Mammary epithelial cell (primary cell): ENCODE measurements at regions of chr19 and their contacts with region 1.

Region 1: DNA sequence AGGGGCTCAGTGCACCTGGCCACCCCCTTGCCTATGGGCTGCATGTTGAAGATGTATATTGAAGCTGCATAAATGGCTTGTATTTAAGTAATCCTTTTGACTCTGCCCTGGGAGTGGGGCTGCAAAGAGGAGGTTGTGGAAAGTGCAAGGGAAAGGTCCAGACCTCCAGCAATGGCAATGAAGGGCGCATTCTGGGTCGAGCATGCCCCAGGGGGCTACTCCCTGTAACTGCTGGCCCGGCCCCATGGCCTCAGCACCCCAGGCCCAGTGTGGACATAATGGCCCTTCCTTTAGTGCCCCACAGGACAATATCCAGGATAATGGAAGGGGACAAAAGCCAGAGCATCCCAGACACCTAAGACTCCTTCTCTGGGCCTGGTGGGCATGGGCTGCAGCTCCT is 43.1 kb upstream of the CHST8 start:
- DNase-seq: no peak
- H3K4me3 ChIP-seq: no peak overlapping the region
- H3K27ac ChIP-seq: no peak overlapping the region
- H3K4me1 ChIP-seq: peaks cover 5% of the 10 kb centered on the region
- H3K27me3 ChIP-seq: no peaks in the 10 kb centered on the region
- CTCF ChIP-seq: no peak

Region 2: GRCh38 chr19:33394006-33394849 is 184.5 kb before region 1 on chr19:
- CTCF ChIA-PET with region 1: no interaction called
- dilution Hi-C with region 1: no loop called
- in situ Hi-C with region 1: no loop called
- intact Hi-C with region 1: no loop called
- DNase-seq: peak; percentile 75
- H3K4me3 ChIP-seq: no peak overlapping the region
- H3K27ac ChIP-seq: peak overlapping the region; percentile 6
- H3K4me1 ChIP-seq: peaks cover 33% of the 10 kb centered on the region
- H3K27me3 ChIP-seq: no peaks in the 10 kb centered on the region
- CTCF ChIP-seq: no peak

Region 3: GRCh38 chr19:33496038-33496895 is 82.4 kb before region 1 on chr19:
- CTCF ChIA-PET with region 1: no interaction called
- dilution Hi-C with region 1: loop called (anchors 5 kb)
- in situ Hi-C with region 1: no loop called
- intact Hi-C with region 1: no loop called
- DNase-seq: no peak
- H3K4me3 ChIP-seq: no peak overlapping the region
- H3K27ac ChIP-seq: no peak overlapping the region
- H3K4me1 ChIP-seq: no peaks in the 10 kb centered on the region
- H3K27me3 ChIP-seq: no peaks in the 10 kb centered on the region
- CTCF ChIP-seq: no peak

Region 4: GRCh38 chr19:33639035-33639681 is 60.5 kb after region 1 on chr19:
- CTCF ChIA-PET with region 1: no interaction called
- dilution Hi-C with region 1: loop called (anchors 5 kb)
- in situ Hi-C with region 1: no loop called
- intact Hi-C with region 1: no loop called
- DNase-seq: no peak
- H3K4me3 ChIP-seq: no peak overlapping the region
- H3K27ac ChIP-seq: no peak overlapping the region
- H3K4me1 ChIP-seq: no peaks in the 10 kb centered on the region
- H3K27me3 ChIP-seq: peaks cover 3% of the 10 kb centered on the region
- CTCF ChIP-seq: no peak